ENCODE measurements at regions of chr22 and their contacts with region 1.

Region 1: DNA sequence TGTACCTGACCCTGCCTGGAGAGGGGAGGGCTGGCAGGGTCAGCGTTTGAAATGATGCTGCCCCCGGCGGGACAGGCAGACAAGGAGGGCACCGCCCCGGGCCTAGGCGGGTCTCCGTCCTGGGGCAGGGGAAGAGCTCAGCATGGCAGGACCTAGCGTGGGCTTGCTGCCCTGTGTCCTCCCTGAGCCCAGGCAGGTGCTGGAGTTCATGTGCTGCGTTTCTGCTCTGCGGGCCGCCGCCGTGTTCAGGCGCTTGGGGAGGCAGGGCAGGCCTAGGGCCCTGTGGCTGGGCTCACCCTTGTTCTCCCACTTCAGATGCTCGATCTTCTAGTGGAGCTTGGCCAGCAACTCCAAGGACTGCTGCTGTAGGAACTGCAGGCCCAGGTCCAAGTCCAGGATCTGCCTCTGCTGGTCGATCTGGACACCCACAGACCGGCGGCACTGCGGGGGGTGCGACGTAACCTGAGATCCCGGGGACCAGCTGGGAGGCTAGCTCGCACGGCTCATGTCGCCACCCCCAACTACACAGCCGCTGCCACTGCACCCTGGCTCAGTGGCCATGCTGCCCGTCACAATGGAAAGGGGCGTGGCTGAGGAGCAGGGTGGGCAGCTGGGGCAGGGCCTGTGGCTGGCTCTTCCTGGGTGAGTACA is 84.4 kb downstream of the MED15 start:
- DNase-seq: no peak
- H3K4me3 ChIP-seq: no peak overlapping the region
- H3K27ac ChIP-seq: no peak overlapping the region
- H3K4me1 ChIP-seq: peaks cover 0 to 5% of the 10 kb centered on the region in 2 experiments; a peak in 1 of 4 replicates
- H3K27me3 ChIP-seq: no peaks in the 10 kb centered on the region
- CTCF ChIP-seq: no peak
- EP300 ChIP-seq: no peak
- RAD21 ChIP-seq: no peak

Region 2: DNA sequence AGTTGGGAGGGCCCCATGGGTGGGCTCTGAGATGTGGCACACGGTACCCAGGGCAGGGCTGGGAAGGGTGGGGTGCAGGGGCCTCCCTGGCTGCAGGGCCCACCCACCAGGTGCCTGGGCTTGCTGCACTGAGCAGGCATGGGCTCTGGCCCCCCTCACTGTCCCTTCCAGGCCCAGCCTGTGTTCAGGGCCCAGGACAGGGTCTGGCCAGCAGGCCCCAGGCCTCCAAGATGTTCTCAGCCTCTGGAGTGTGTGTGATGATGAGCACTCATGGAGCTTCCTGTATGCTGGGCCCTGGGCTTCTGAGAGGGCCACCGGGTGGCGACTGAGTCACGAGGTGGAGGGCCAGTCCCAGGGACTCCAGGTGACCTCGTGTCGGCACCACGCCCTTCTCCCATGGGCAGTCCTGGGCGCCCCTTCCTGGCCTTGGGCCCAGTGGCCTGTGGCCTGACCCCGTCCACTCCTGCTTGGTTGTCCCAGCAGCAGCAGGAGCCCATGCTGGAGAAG is 385.0 kb before region 1 on chr22:
- CTCF ChIA-PET with region 1: no interaction called
- POLR2A ChIA-PET with region 1: no interaction called
- DNase-seq: no peak
- H3K4me3 ChIP-seq: peak overlapping the region in 1 of 2 experiments; percentile 31; a peak in 1 of 4 replicates
- H3K27ac ChIP-seq: no peak overlapping the region
- H3K4me1 ChIP-seq: peaks cover 0 to 27% of the 10 kb centered on the region in 2 experiments; a peak in 1 of 4 replicates
- H3K27me3 ChIP-seq: no peaks in the 10 kb centered on the region
- CTCF ChIP-seq: no peak
- EP300 ChIP-seq: no peak
- RAD21 ChIP-seq: no peak

Region 3: DNA sequence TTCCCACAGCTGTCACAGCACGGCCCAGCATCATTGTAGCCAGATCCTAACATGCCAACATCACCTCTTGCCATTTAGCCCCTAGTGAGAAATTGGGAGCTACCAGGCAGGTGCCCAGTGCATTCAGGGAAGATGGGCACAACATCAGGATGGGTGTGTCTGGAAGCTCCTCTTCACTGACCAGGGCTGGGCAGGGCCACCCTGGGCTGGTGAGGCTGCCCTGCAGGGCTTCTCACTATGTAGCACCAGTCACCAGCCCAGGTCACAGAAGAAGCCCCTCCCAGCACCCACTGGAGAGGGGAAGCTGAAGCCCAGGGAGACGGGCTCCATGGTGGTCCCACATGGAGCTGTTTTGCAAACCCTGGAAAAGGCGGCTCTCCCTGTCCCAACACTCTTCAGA is 184.0 kb before region 1 on chr22:
- CTCF ChIA-PET with region 1: no interaction called
- POLR2A ChIA-PET with region 1: no interaction called
- DNase-seq: no peak
- H3K4me3 ChIP-seq: no peak overlapping the region
- H3K27ac ChIP-seq: no peak overlapping the region
- H3K4me1 ChIP-seq: no peaks in the 10 kb centered on the region
- H3K27me3 ChIP-seq: no peaks in the 10 kb centered on the region
- CTCF ChIP-seq: no peak
- EP300 ChIP-seq: no peak
- RAD21 ChIP-seq: no peak

Region 4: GRCh38 chr22:20606041-20606783 is 14.4 kb after region 1 on chr22:
- CTCF ChIA-PET with region 1: interaction called, 10 read pairs
- POLR2A ChIA-PET with region 1: no interaction called
- DNase-seq: peak; percentile 64
- H3K4me3 ChIP-seq: no peak overlapping the region; a peak in 1 of 4 replicates
- H3K27ac ChIP-seq: no peak overlapping the region
- H3K4me1 ChIP-seq: peaks cover 0 to 9% of the 10 kb centered on the region in 2 experiments; a peak in 1 of 4 replicates
- H3K27me3 ChIP-seq: no peaks in the 10 kb centered on the region; the same call in 1 of the 2 replicates
- CTCF ChIP-seq: peak; percentile 58
- EP300 ChIP-seq: no peak
- RAD21 ChIP-seq: peak; percentile 58